CD8-positive, alpha-beta T cell (primary cell): ENCODE measurements at regions of chr17 and their contacts with region 1.

Region 1: DNA sequence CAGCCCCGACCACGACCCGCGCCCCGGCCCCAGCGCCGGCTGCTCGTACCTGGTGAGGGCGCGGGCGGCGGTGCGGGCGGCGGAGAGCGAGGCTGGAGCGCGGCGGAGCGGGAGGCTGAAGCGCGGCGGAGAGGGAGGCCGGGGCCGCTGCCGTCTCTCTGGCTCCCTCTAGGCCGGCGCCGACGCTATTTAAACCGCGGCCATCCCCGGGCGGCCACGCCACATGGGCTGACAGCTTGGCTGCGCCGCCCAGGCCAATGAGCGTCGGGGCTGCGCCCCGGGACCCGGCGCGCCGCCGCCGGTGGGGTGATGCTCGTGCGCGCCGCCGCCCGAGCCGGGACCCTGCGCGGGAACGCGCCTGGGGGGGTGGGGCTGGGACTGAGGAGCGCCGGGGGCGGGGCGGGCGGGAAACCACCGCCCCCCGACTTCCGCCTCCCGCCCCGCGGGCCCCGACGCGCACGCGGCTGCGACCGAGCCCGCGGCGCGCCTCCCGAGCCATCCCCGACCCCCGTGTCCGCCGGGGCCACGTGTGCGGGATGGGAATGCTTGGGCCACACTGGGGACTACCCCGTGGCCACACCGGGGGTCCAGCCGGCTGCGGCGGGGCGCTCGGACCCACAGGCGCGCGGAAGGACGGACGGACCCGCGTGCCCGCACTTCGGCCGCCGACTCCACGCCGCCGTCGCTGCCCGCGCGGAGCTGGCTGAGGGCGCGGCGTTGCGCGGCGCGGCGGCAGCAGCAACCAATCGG is at the start of gene FASN:
- DNase-seq: peak; percentile 81 to 96 (median 92)
- ATAC-seq: peak; percentile 61
- H3K4me3 ChIP-seq: peak within 1 kb of the TSS; percentile 48 to 74
- H3K4me3 Mint-ChIP-seq: peak within 1 kb of the TSS; percentile 74
- H3K27ac ChIP-seq: peak within 1 kb of the TSS; percentile 81 to 87
- H3K27ac Mint-ChIP-seq: peak within 1 kb of the TSS; percentile 41
- H3K4me1 ChIP-seq: peaks cover 20% of the 10 kb centered on the region
- H3K4me1 Mint-ChIP-seq: peaks cover 5% of the 10 kb centered on the region
- H3K27me3 ChIP-seq: no peaks in the 10 kb centered on the region
- H3K27me3 Mint-ChIP-seq: no peaks in the 10 kb centered on the region
- CTCF ChIP-seq: peak; percentile 13
- total RNA-seq, gene FASN: 245 to 263 TPM

Region 2: GRCh38 chr17:81977211-81978027 is 120.8 kb before region 1 on chr17 and contains the start of gene ASPSCR1:
- CTCF ChIA-PET with region 1: no interaction called
- POLR2A ChIA-PET with region 1: no interaction called
- intact Hi-C with region 1: loop called (anchors 1 kb)
- DNase-seq: peak; percentile 73 to 95 (median 90)
- ATAC-seq: peak; percentile 91
- H3K4me3 ChIP-seq: peak within 1 kb of the TSS; percentile 77 to 97
- H3K4me3 Mint-ChIP-seq: peak within 1 kb of the TSS; percentile 97
- H3K27ac ChIP-seq: peak within 1 kb of the TSS; percentile 72 to 83
- H3K27ac Mint-ChIP-seq: peak within 1 kb of the TSS; percentile 95
- H3K4me1 ChIP-seq: peaks cover 29% of the 10 kb centered on the region
- H3K4me1 Mint-ChIP-seq: peaks cover 33% of the 10 kb centered on the region
- H3K27me3 ChIP-seq: no peaks in the 10 kb centered on the region
- H3K27me3 Mint-ChIP-seq: no peaks in the 10 kb centered on the region
- CTCF ChIP-seq: no peak
- total RNA-seq, gene ASPSCR1: 18.6 to 19.5 TPM

Region 3: DNA sequence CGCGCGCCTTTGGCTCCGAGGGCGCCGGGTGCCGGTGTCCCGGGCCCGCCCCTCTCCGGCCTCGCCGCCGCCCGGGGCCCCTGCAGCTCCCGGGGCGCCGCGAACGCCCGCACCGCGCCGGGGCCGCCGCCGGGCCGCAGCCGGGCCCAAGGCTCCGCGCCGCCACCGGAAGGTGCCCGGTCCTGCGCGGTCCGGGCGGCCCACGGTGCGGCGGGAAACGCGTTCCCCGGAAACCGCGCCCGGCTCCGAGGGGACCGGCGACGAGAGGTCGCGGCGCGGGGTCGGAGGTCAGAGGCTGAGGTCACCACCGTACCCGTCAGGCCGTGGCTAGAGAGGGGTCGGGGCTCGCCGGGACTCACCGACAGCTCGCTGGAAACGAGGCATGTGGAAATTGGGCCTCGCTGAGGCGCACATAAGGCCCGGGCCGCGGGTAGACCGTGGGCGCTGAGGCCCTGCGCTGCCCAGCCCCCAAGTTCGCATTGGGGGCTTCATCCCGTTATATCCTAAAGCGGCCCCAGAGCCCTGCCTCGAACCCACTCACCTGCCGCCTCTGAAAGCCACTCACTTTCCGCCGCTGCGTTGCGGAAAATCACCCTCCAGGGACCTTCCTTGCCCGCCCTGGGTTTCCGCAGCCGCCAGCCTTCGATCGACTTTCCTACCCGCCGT is 32.5 kb before region 1 on chr17 and contains the start of gene DUS1L:
- CTCF ChIA-PET with region 1: no interaction called
- POLR2A ChIA-PET with region 1: interaction called, 14 read pairs
- intact Hi-C with region 1: loop called (anchors 2 kb)
- DNase-seq: peak; percentile 44 to 86 (median 68)
- ATAC-seq: peak; percentile 87
- H3K4me3 ChIP-seq: peak within 1 kb of the TSS; percentile 79 to 87
- H3K4me3 Mint-ChIP-seq: peak within 1 kb of the TSS; percentile 82
- H3K27ac ChIP-seq: peak within 1 kb of the TSS; percentile 70 to 91
- H3K27ac Mint-ChIP-seq: peak within 1 kb of the TSS; percentile 92
- H3K4me1 ChIP-seq: peaks cover 20% of the 10 kb centered on the region
- H3K4me1 Mint-ChIP-seq: peaks cover 14% of the 10 kb centered on the region
- H3K27me3 ChIP-seq: no peaks in the 10 kb centered on the region
- H3K27me3 Mint-ChIP-seq: no peaks in the 10 kb centered on the region
- CTCF ChIP-seq: no peak
- total RNA-seq, gene DUS1L: 159 to 174 TPM

Region 4: GRCh38 chr17:82129095-82129494 is 30.8 kb after region 1 on chr17:
- CTCF ChIA-PET with region 1: interaction called, 3 read pairs
- POLR2A ChIA-PET with region 1: interaction called, 21 read pairs
- intact Hi-C with region 1: loop called (anchors 1 kb)
- DNase-seq: no peak
- ATAC-seq: no peak
- H3K4me3 ChIP-seq: no peak overlapping the region
- H3K4me3 Mint-ChIP-seq: no peak overlapping the region
- H3K27ac ChIP-seq: no peak overlapping the region
- H3K27ac Mint-ChIP-seq: peak overlapping the region; percentile 98
- H3K4me1 ChIP-seq: peaks cover 46% of the 10 kb centered on the region
- H3K4me1 Mint-ChIP-seq: peaks cover 47% of the 10 kb centered on the region
- H3K27me3 ChIP-seq: no peaks in the 10 kb centered on the region
- H3K27me3 Mint-ChIP-seq: no peaks in the 10 kb centered on the region
- CTCF ChIP-seq: no peak